ENCODE measurements at regions of chr15 and their contacts with region 1.

Region 1: GRCh38 chr15:69576035-69576526 is 123.5 kb downstream of the RPLP1 start:
- DNase-seq: peak; percentile 61 to 84
- ATAC-seq: peak; percentile 78 to 94 (median 93)
- H3K4me3 ChIP-seq: no peak overlapping the region
- H3K4me3 Mint-ChIP-seq: no peak overlapping the region
- H3K27ac ChIP-seq: no peak overlapping the region
- H3K27ac Mint-ChIP-seq: no peak overlapping the region
- H3K4me1 ChIP-seq: peaks cover 24% of the 10 kb centered on the region
- H3K4me1 Mint-ChIP-seq: peaks cover 9 to 17% of the 10 kb centered on the region in 2 donors
- H3K27me3 ChIP-seq: no peaks in the 10 kb centered on the region
- H3K27me3 Mint-ChIP-seq: peaks cover 34 to 58% of the 10 kb centered on the region in 2 donors
- CTCF ChIP-seq: peak; percentile 69

Region 2: GRCh38 chr15:69612112-69612511 is 36.0 kb after region 1 on chr15:
- intact Hi-C with region 1: loop called (anchors 1 kb)
- DNase-seq: no peak
- ATAC-seq: no peak
- H3K4me3 ChIP-seq: no peak overlapping the region
- H3K4me3 Mint-ChIP-seq: no peak overlapping the region
- H3K27ac ChIP-seq: no peak overlapping the region
- H3K27ac Mint-ChIP-seq: no peak overlapping the region
- H3K4me1 ChIP-seq: no peaks in the 10 kb centered on the region
- H3K4me1 Mint-ChIP-seq: peaks cover 0 to 9% of the 10 kb centered on the region in 2 donors
- H3K27me3 ChIP-seq: no peaks in the 10 kb centered on the region
- H3K27me3 Mint-ChIP-seq: peaks cover 8 to 20% of the 10 kb centered on the region in 2 donors
- CTCF ChIP-seq: no peak

Region 3: GRCh38 chr15:69713726-69714559 is 137.9 kb after region 1 on chr15:
- intact Hi-C with region 1: no loop called
- DNase-seq: peak; percentile 65 to 91
- ATAC-seq: peak; percentile 84 to 91 (median 89)
- H3K4me3 ChIP-seq: no peak overlapping the region
- H3K4me3 Mint-ChIP-seq: peak overlapping the region; percentile 81
- H3K27ac ChIP-seq: peak overlapping the region; percentile 67
- H3K27ac Mint-ChIP-seq: peak overlapping the region; percentile 87 to 90
- H3K4me1 ChIP-seq: peaks cover 62% of the 10 kb centered on the region
- H3K4me1 Mint-ChIP-seq: peaks cover 65 to 72% of the 10 kb centered on the region in 2 donors
- H3K27me3 ChIP-seq: no peaks in the 10 kb centered on the region
- H3K27me3 Mint-ChIP-seq: no peaks in the 10 kb centered on the region
- CTCF ChIP-seq: no peak

Region 4: GRCh38 chr15:70463460-70463881 is 887.4 kb after region 1 on chr15:
- intact Hi-C with region 1: loop called (anchors 2 kb)
- DNase-seq: no peak
- ATAC-seq: no peak
- H3K4me3 ChIP-seq: no peak overlapping the region
- H3K4me3 Mint-ChIP-seq: no peak overlapping the region
- H3K27ac ChIP-seq: no peak overlapping the region
- H3K27ac Mint-ChIP-seq: no peak overlapping the region
- H3K4me1 ChIP-seq: peaks cover 33% of the 10 kb centered on the region
- H3K4me1 Mint-ChIP-seq: peaks cover 15 to 25% of the 10 kb centered on the region in 2 donors
- H3K27me3 ChIP-seq: peaks cover 16% of the 10 kb centered on the region
- H3K27me3 Mint-ChIP-seq: peaks cover 54 to 72% of the 10 kb centered on the region in 2 donors
- CTCF ChIP-seq: no peak

Region 5: GRCh38 chr15:70722266-70723121 is 1146.4 kb after region 1 on chr15:
- intact Hi-C with region 1: loop called (anchors 10 kb)
- DNase-seq: peak in 1 of 2 donors; percentile 72
- ATAC-seq: peak in 1 of 3 donors; percentile 51
- H3K4me3 ChIP-seq: no peak overlapping the region
- H3K4me3 Mint-ChIP-seq: no peak overlapping the region
- H3K27ac ChIP-seq: no peak overlapping the region
- H3K27ac Mint-ChIP-seq: no peak overlapping the region
- H3K4me1 ChIP-seq: no peaks in the 10 kb centered on the region
- H3K4me1 Mint-ChIP-seq: peaks cover 5% of the 10 kb centered on the region in 2 donors
- H3K27me3 ChIP-seq: peaks cover 7% of the 10 kb centered on the region
- H3K27me3 Mint-ChIP-seq: peaks cover 3 to 15% of the 10 kb centered on the region in 2 donors
- CTCF ChIP-seq: peak; percentile 92

Measured in natural killer cell (primary cell).